Psoas muscle (tissue), 8 donors: ENCODE measurements at regions of chr12 and their contacts with region 1.

Region 1: GRCh38 chr12:96399919-96400797 is at the start of gene CDK17:
- DNase-seq: peak; percentile 87 to 92
- ATAC-seq: peak; percentile 89 to 91 (median 90)
- H3K4me3 ChIP-seq: peak within 1 kb of the TSS; percentile 94
- H3K27ac ChIP-seq: peak within 1 kb of the TSS; percentile 98
- H3K4me1 ChIP-seq: peaks cover 25% of the 10 kb centered on the region
- H3K27me3 ChIP-seq: no peaks in the 10 kb centered on the region
- CTCF ChIP-seq: peak; percentile 69
- total RNA-seq, gene CDK17: 13.3 to 21.4 (median 16.1) TPM

Region 2: DNA sequence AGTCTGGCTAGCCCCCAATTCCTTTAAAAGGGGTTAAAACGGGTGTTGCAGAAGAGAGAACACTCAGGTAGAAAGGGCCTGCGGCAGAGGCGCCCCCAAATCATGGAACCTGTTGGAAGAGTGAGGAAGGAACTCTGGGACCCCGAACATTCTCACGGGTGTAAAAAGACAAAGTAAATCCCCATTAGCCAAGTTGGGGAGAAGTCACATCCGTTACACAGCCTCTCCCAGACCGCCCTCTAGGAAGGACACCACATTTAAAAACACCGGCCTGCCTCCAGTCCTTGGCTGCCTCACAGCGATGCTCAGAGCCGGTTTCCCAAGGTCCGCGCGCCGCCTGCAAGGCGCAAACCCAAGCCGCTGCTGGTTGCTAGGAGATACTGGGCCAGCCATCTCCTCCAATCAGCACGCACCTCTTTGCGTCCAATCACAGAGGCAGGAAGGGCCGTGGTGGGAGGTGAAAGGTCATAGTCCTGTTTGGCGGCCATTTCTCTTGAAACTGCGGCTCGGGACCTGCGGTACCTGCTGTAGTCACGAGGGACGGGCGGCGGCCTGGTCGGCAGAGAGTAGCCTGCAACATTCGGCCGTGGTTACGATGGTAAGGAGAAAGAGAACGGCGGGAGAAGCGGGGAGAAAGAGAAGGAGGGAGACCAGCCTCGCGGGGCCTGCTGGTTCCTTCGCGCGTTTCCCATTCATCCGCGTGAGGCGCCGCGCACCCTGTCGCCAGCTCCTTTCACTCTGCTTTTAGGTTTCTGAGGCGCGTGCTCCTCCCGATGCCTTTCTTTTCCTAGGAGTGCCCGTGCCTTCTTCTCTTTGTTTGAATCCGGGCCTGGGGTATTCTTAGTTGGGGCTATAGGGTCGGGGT is 541.4 kb before region 1 on chr12 and contains the start of gene SNRPF:
- intact Hi-C with region 1: loop called in 1 of 2 experiments (anchors 10 kb)
- DNase-seq: peak; percentile 92 to 96
- ATAC-seq: peak; percentile 100
- H3K4me3 ChIP-seq: peak within 1 kb of the TSS; percentile 74
- H3K27ac ChIP-seq: peak within 1 kb of the TSS; percentile 75
- H3K4me1 ChIP-seq: peaks cover 10% of the 10 kb centered on the region
- H3K27me3 ChIP-seq: no peaks in the 10 kb centered on the region
- CTCF ChIP-seq: no peak
- total RNA-seq, gene SNRPF: 8.8 to 13.7 (median 11.3) TPM

Region 3: DNA sequence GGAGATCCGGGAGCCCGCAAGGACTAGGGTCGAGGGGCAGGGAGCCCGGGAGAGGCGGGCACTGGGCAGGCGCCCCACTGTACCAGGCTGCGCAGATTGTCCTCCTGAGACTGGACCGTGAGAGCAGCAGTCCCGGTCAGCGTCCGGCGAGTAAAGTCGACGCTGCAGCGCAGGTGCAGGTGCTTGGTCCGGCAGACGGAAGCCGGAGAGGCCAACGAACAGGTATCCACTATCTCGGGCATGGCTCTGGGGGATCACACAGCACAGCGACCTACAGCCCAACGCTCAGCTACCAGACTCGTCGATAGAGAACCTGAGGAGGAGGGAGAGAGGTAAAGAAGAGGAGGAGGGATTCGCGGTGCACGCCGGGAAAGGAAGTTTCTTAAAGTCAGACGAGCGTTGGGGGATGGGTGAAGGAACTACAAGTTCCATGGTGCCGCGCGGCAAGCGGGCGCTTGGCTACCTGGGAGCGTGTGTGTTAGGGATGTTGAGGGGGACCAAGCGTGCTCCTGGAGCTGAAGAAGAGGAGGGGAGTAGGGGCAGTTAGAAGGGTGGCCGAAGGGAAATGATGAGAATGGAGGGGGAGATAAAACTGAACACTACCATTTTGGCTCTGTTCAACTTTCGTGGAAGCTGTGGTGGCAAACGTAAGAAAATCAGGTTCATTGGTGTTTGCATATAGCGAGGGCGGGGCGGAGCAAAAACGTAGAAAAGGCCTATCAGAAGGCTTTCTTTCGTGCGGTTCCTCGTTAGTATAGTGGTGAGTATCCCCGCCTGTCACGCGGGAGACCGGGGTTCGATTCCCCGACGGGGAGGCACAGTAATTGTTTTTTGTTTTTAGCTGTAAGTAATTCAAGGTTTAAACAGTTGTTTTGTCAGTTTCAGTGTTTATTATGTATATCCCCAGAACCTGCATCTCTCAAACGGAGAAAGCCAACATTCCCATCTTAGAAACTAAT is 364.6 kb before region 1 on chr12 and contains the start of gene LTA4H:
- intact Hi-C with region 1: loop called in 1 of 2 experiments (anchors 10 kb)
- DNase-seq: peak; percentile 96 to 97
- ATAC-seq: peak; percentile 98 to 99 (median 98)
- H3K4me3 ChIP-seq: peak within 1 kb of the TSS; percentile 87
- H3K27ac ChIP-seq: peak within 1 kb of the TSS; percentile 77
- H3K4me1 ChIP-seq: peaks cover 17% of the 10 kb centered on the region
- H3K27me3 ChIP-seq: no peaks in the 10 kb centered on the region
- CTCF ChIP-seq: no peak
- total RNA-seq, gene LTA4H: 27.5 to 51.2 (median 33.4) TPM

Region 4: GRCh38 chr12:96219698-96220206 is 180.4 kb before region 1 on chr12:
- intact Hi-C with region 1: loop called in 1 of 2 experiments (anchors 5 kb)
- DNase-seq: no peak
- ATAC-seq: peak in 3 of 4 donors; percentile 27 to 60 (median 36)
- H3K4me3 ChIP-seq: no peak overlapping the region
- H3K27ac ChIP-seq: no peak overlapping the region
- H3K4me1 ChIP-seq: peaks cover 4% of the 10 kb centered on the region
- H3K27me3 ChIP-seq: peaks cover 0 to 7% (median 0%) of the 10 kb centered on the region in 3 donors
- CTCF ChIP-seq: no peak

Region 5: DNA sequence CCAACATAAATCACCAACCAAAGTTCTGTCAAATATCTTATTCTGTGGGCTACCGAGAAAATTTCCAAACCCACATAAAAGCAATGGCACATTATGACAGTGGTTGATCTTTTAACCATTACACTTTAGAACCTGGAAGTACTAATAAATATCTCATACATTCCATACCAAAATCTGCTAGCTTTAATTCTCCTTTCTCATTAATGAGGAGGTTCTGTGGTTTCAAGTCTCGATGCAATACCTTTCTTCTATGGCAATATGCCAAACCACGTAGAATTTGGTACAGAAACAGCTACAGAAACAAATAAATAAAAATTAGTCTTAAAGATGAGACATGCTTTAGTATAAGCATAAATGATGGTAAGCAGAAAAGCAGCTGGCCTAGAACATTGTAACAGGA is 105.3 kb before region 1 on chr12:
- intact Hi-C with region 1: loop called in 1 of 2 experiments (anchors 10 kb)
- DNase-seq: no peak
- ATAC-seq: no peak
- H3K4me3 ChIP-seq: no peak overlapping the region
- H3K27ac ChIP-seq: no peak overlapping the region
- H3K4me1 ChIP-seq: no peaks in the 10 kb centered on the region
- H3K27me3 ChIP-seq: no peaks in the 10 kb centered on the region
- CTCF ChIP-seq: no peak

Region 6: GRCh38 chr12:96427269-96427729 is 27.1 kb after region 1 on chr12:
- intact Hi-C with region 1: no loop called
- DNase-seq: peak; percentile 69 to 80
- ATAC-seq: peak; percentile 60 to 88 (median 84)
- H3K4me3 ChIP-seq: no peak overlapping the region
- H3K27ac ChIP-seq: peak overlapping the region; percentile 64
- H3K4me1 ChIP-seq: no peaks in the 10 kb centered on the region
- H3K27me3 ChIP-seq: no peaks in the 10 kb centered on the region
- CTCF ChIP-seq: no peak

Region 7: GRCh38 chr12:96516472-96517430 is 116.6 kb after region 1 on chr12:
- intact Hi-C with region 1: loop called in 1 of 2 experiments (anchors 10 kb)
- DNase-seq: peak; percentile 65 to 75
- ATAC-seq: peak in 1 of 4 donors; percentile 66
- H3K4me3 ChIP-seq: no peak overlapping the region
- H3K27ac ChIP-seq: no peak overlapping the region
- H3K4me1 ChIP-seq: no peaks in the 10 kb centered on the region
- H3K27me3 ChIP-seq: no peaks in the 10 kb centered on the region
- CTCF ChIP-seq: peak; percentile 54

Region 8: DNA sequence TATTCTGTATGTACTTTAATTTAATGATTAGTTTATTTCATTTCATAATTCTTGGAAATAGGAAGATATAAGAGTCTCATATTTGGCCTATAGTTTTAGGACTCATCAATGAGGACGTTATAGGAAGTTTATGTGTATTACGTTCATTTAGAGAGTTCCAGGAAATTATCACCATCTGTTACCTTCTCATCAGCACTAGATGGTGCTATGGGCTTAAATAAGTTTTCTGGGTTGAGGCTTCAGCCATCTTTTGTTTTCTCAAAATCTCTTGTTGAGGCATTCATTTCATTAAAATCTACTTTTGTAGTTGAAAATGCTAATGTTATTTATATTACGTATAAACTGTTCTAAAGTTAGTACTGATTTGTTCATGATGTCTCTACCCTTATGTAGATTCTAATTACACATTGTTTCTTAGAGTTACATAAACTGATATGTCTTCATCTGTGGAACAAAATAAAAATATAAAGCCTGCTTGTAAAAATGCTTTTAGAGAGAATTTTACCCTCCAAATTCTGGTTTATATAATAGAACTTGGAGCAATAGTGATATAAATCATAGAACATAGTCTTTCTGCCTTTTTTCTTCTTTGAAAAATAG is 178.5 kb after region 1 on chr12:
- intact Hi-C with region 1: no loop called
- DNase-seq: no peak
- ATAC-seq: peak in 1 of 4 donors; percentile 48
- H3K4me3 ChIP-seq: no peak overlapping the region
- H3K27ac ChIP-seq: no peak overlapping the region
- H3K4me1 ChIP-seq: no peaks in the 10 kb centered on the region
- H3K27me3 ChIP-seq: no peaks in the 10 kb centered on the region
- CTCF ChIP-seq: peak; percentile 65